Activated CD4-positive, alpha-beta memory T cell treated with anti-CD3 and anti-CD28 coated beads for 36 hours (primary cell): ENCODE measurements at regions of chr14 and their contacts with region 1.

Region 1: GRCh38 chr14:103808403-103809001 is 38.9 kb downstream of the PPP1R13B start:
- DNase-seq: peak; percentile 72
- H3K4me3 Mint-ChIP-seq: no peak overlapping the region
- H3K27ac Mint-ChIP-seq: no peak overlapping the region
- H3K4me1 Mint-ChIP-seq: peaks cover 14% of the 10 kb centered on the region
- H3K27me3 Mint-ChIP-seq: no peaks in the 10 kb centered on the region

Region 2: GRCh38 chr14:103788086-103788485 is 20.4 kb before region 1 on chr14:
- CTCF ChIA-PET with region 1: interaction called, 17 read pairs
- POLR2A ChIA-PET with region 1: no interaction called
- intact Hi-C with region 1: no loop called
- DNase-seq: no peak
- H3K4me3 Mint-ChIP-seq: no peak overlapping the region
- H3K27ac Mint-ChIP-seq: no peak overlapping the region
- H3K4me1 Mint-ChIP-seq: no peaks in the 10 kb centered on the region
- H3K27me3 Mint-ChIP-seq: no peaks in the 10 kb centered on the region

Region 3: GRCh38 chr14:103825101-103825500 is 16.6 kb after region 1 on chr14:
- CTCF ChIA-PET with region 1: interaction called, 16 read pairs
- POLR2A ChIA-PET with region 1: no interaction called
- intact Hi-C with region 1: no loop called
- DNase-seq: no peak
- H3K4me3 Mint-ChIP-seq: no peak overlapping the region
- H3K27ac Mint-ChIP-seq: no peak overlapping the region
- H3K4me1 Mint-ChIP-seq: peaks cover 10% of the 10 kb centered on the region
- H3K27me3 Mint-ChIP-seq: no peaks in the 10 kb centered on the region

Region 4: GRCh38 chr14:103890821-103891666 is 82.5 kb after region 1 on chr14:
- CTCF ChIA-PET with region 1: no interaction called
- POLR2A ChIA-PET with region 1: no interaction called
- intact Hi-C with region 1: no loop called
- DNase-seq: no peak
- H3K4me3 Mint-ChIP-seq: no peak overlapping the region
- H3K27ac Mint-ChIP-seq: no peak overlapping the region
- H3K4me1 Mint-ChIP-seq: no peaks in the 10 kb centered on the region
- H3K27me3 Mint-ChIP-seq: no peaks in the 10 kb centered on the region

Region 5: GRCh38 chr14:103904493-103905107 is 96.1 kb after region 1 on chr14:
- CTCF ChIA-PET with region 1: interaction called, 100 read pairs
- POLR2A ChIA-PET with region 1: no interaction called
- intact Hi-C with region 1: no loop called
- DNase-seq: no peak
- H3K4me3 Mint-ChIP-seq: no peak overlapping the region
- H3K27ac Mint-ChIP-seq: no peak overlapping the region
- H3K4me1 Mint-ChIP-seq: peaks cover 3% of the 10 kb centered on the region
- H3K27me3 Mint-ChIP-seq: no peaks in the 10 kb centered on the region

Region 6: GRCh38 chr14:103920981-103921854 is 112.7 kb after region 1 on chr14:
- CTCF ChIA-PET with region 1: interaction called, 12 read pairs
- POLR2A ChIA-PET with region 1: no interaction called
- intact Hi-C with region 1: no loop called
- DNase-seq: peak; percentile 96
- H3K4me3 Mint-ChIP-seq: peak overlapping the region; percentile 89
- H3K27ac Mint-ChIP-seq: peak overlapping the region; percentile 72
- H3K4me1 Mint-ChIP-seq: peaks cover 15% of the 10 kb centered on the region
- H3K27me3 Mint-ChIP-seq: peaks cover 6% of the 10 kb centered on the region